ENCODE measurements at regions of chr6 and their contacts with region 1.

Region 1: DNA sequence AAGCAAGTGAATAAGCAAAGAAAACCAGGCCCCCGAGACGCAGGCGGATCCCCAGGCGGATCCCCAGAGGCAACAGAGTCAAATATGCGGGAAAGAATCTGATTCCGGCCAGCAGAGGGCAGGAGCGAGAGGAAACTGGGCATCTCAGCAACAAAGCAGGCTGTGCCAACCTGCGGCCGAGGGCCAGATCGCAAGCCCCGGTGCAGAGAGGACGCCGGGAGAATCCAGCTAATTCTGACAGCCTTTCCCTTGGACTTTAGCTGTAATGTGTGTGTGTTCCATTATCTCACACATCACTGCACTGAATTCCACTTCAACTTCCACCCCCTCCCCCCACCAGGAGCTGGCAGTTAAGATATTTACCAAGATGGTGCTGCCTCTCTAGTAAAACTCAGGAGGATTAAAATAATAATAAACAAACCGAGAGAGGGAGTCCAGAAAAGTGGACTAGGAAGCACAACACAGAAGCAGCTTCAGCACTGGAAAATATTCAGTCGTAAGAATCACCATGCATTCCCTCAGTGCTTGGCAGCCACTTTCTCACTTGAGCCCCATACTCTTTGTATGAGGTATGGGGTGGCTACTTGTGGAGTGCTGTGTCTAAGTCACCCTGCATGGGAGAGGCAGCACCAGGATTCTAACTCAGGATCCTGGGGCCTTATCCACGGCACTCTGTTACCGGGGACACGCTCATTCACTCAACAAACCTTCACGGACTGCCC is 66.2 kb upstream of the SNX9 start:
- DNase-seq: peak; percentile 87
- H3K4me3 ChIP-seq: peak overlapping the region; percentile 14
- H3K27ac ChIP-seq: no peak overlapping the region
- H3K4me1 ChIP-seq: peaks cover 4% of the 10 kb centered on the region
- H3K27me3 ChIP-seq: no peaks in the 10 kb centered on the region
- CTCF ChIP-seq: peak; percentile 90

Region 2: DNA sequence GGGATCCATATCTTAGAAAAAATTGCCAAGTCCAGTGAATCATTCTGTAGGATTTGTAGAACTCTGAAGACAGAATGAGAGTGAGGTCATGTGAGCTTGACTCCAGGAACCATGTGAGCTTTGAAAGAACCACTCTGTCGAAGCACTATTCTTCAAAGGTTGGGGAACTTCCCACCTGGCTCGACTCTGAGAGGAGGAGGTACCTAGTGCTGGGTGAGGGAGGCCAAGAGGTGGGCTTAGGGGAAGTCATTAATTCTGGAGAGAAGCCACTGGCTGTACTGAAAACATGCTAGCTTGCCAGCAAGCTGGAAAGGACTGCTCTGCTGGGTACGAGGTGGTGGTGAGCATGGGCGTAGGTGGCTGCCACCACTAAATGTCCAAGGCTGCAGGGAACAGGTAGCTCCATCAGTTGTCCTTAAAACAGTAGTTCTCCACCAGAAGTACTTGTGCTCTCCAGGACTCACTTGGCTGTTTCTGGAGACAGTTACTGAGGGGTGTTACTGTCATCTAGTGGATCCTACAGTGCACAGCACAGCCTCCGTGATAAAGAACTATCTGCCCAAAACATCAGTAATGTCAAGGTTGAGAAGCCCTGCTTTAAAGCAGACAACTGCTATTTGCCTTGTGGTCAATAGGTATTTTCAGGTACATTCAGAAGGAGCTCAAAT is 190.1 kb after region 1 on chr6:
- CTCF ChIA-PET with region 1: no interaction called
- POLR2A ChIA-PET with region 1: no interaction called
- intact Hi-C with region 1: loop called (anchors 2 kb)
- DNase-seq: peak; percentile 41
- H3K4me3 ChIP-seq: no peak overlapping the region
- H3K27ac ChIP-seq: no peak overlapping the region
- H3K4me1 ChIP-seq: no peaks in the 10 kb centered on the region
- H3K27me3 ChIP-seq: no peaks in the 10 kb centered on the region
- CTCF ChIP-seq: peak; percentile 60

Region 3: DNA sequence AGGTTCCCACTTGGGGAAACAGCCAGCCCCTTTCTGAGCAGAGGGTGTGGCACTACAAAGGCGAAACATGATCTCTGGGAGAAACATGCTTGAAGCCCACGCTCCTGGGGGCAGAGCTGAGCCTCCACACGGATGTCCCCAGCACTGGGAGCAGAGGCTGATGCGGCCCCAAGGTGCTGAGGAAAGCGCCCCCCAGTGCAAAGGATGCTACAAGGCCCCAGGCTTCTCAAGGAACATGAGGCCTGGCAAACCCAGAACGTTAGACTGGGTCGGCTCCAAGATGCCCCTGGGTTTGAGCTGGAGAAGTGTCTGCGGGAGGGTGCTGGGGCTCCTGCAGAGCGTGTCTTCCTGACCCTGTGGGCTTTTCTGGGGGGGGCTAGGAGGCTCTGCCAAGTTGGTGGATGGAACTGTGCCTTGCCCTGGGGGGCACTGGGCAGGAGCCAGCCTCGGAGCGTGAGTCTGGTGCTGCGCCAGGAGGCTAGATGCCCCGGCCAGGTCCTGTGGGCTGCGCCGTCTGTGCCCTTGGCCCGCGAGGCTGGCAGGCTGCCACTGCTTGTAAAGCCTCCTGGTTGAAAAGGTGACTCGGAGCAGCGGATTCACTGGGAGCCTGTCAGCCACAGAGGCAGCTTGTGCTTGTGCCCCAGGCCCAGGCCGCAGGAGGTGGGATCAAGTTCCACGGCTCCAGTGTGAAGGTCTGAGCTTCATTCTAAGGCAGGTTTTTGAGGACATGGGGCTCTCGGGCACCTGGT is 232.8 kb after region 1 on chr6:
- CTCF ChIA-PET with region 1: no interaction called
- POLR2A ChIA-PET with region 1: no interaction called
- intact Hi-C with region 1: no loop called
- DNase-seq: peak; percentile 71
- H3K4me3 ChIP-seq: no peak overlapping the region
- H3K27ac ChIP-seq: no peak overlapping the region
- H3K4me1 ChIP-seq: peaks cover 22% of the 10 kb centered on the region
- H3K27me3 ChIP-seq: no peaks in the 10 kb centered on the region
- CTCF ChIP-seq: no peak

Region 4: GRCh38 chr6:158131926-158132325 is 375.1 kb after region 1 on chr6:
- CTCF ChIA-PET with region 1: no interaction called
- POLR2A ChIA-PET with region 1: no interaction called
- intact Hi-C with region 1: loop called (anchors 10 kb)
- DNase-seq: peak; percentile 55
- H3K4me3 ChIP-seq: no peak overlapping the region
- H3K27ac ChIP-seq: no peak overlapping the region
- H3K4me1 ChIP-seq: no peaks in the 10 kb centered on the region
- H3K27me3 ChIP-seq: no peaks in the 10 kb centered on the region
- CTCF ChIP-seq: peak; percentile 52